Dendritic cell treated with granulocyte-macrophage colony-stimulating factor and Interleukin-4, amounts not matched to agents 40 ng/mL and 50 ng/mL, for 4 days (primary cell): ENCODE measurements at regions of chr2 and their contacts with region 1.

Region 1: DNA sequence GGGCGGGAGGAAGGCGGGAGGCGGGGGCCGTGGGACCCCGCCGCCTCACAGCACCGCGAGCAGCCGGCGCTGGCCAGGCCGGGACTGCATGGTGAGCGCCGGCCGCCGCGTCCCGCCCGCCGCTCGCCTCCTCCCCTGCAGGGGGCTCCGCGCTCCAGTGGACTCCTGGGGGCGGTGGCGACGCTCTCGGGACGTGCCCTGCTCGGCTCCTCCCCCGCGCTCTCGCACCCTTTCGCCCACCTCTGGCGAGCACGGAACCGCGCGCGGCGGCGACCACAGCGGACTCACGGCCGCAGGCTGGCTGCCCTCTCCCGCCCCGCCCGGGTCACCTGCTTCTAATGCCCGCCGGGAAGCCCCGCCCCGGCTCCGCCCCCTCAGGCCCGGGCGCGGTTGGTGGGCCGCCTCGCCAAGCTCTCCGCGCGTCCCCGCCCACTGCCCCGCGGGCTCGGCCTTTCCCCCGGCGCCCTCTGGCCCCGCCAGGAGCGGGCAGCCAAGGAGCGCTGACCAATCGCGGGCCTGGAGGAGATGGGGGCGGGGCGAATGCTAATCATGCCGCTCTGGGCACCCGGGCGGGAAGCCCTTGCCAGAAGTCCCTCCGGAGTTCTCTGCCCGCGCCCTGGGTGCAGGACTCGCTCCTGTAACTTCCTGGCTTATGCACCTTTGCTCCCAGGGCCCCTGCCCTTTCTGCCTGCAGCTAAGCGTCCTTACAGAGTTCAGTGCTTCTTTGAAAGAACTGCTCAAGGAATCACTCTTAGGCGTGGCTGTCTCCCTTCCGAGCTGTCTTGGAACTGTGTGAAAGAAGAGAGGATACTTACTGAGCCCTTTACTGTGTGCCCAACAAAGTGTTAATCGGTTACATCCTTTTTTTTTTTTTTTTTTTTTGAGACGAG is at the start of gene FZD5:
- H3K4me3 Mint-ChIP-seq: peak within 1 kb of the TSS; percentile 88
- H3K27ac Mint-ChIP-seq: peak within 1 kb of the TSS; percentile 88
- H3K4me1 Mint-ChIP-seq: peaks cover 49% of the 10 kb centered on the region
- H3K27me3 Mint-ChIP-seq: peaks cover 30% of the 10 kb centered on the region

Region 2: GRCh38 chr2:207711750-207712530 is 57.9 kb before region 1 on chr2:
- intact Hi-C with region 1: no loop called
- H3K4me3 Mint-ChIP-seq: peak overlapping the region; percentile 97
- H3K27ac Mint-ChIP-seq: peak overlapping the region; percentile 96
- H3K4me1 Mint-ChIP-seq: peaks cover 47% of the 10 kb centered on the region
- H3K27me3 Mint-ChIP-seq: no peaks in the 10 kb centered on the region

Region 3: GRCh38 chr2:207813221-207813916 is 43.5 kb after region 1 on chr2:
- intact Hi-C with region 1: loop called (anchors 5 kb)
- H3K4me3 Mint-ChIP-seq: no peak overlapping the region
- H3K27ac Mint-ChIP-seq: no peak overlapping the region
- H3K4me1 Mint-ChIP-seq: peaks cover 30% of the 10 kb centered on the region
- H3K27me3 Mint-ChIP-seq: no peaks in the 10 kb centered on the region

Region 4: GRCh38 chr2:207974216-207974605 is 204.4 kb after region 1 on chr2:
- intact Hi-C with region 1: loop called (anchors 5 kb)
- H3K4me3 Mint-ChIP-seq: no peak overlapping the region
- H3K27ac Mint-ChIP-seq: no peak overlapping the region
- H3K4me1 Mint-ChIP-seq: peaks cover 21% of the 10 kb centered on the region
- H3K27me3 Mint-ChIP-seq: no peaks in the 10 kb centered on the region

Region 5: DNA sequence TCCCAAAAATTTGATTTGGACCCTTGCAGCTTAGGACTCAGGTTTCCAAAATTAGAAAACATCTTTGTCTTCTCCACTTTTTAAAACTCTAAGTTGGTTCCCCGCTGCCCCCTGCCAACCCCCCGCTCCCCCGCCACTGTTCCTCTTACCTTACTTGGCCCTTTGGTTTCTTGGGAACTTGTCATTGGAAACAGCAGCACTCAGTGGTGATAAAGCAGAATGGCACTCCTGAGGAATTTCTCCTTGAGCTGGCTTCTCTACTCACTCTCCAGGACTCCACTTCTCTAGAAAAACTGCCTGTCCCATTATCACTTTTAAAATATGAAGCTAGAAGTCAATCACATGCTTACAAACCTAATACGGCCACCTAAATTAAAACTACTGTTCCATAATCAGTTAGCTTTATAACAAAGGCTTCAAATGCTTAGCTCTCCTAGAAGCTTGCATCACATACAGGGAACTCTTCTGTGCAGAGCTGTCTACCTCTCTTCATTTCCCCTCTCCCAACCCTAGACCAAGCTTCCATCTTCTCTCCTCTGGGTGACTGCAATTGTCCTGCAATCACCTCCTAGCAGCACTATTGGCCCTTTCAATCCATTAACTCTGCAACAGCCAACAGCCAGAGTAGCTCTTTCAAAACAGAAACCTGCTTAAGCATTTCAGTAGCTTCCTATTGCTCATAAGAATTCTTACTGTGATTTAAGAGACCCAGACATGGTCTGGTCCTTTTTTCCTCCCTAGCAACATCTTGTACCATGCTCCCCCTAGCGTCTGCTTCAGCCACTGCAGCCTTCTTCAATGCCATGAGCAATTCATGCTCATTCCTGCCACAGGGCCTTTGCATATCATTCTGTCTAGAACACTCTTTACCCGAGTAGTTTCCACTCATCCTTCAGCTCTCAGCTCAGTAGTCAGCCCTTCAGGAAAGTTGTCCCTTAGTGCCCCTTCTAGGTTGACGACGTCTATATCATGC is 270.6 kb after region 1 on chr2:
- intact Hi-C with region 1: loop called (anchors 5 kb)
- H3K4me3 Mint-ChIP-seq: no peak overlapping the region
- H3K27ac Mint-ChIP-seq: no peak overlapping the region
- H3K4me1 Mint-ChIP-seq: peaks cover 9% of the 10 kb centered on the region
- H3K27me3 Mint-ChIP-seq: no peaks in the 10 kb centered on the region

Region 6: GRCh38 chr2:208999911-209000310 is 1230.1 kb after region 1 on chr2:
- intact Hi-C with region 1: no loop called
- H3K4me3 Mint-ChIP-seq: no peak overlapping the region
- H3K27ac Mint-ChIP-seq: no peak overlapping the region
- H3K4me1 Mint-ChIP-seq: no peaks in the 10 kb centered on the region
- H3K27me3 Mint-ChIP-seq: no peaks in the 10 kb centered on the region